Activated CD8-positive, alpha-beta T cell treated with anti-CD3 and anti-CD28 coated beads for 36 hours (primary cell): ENCODE measurements at regions of chr21 and their contacts with region 1.

Region 1: DNA sequence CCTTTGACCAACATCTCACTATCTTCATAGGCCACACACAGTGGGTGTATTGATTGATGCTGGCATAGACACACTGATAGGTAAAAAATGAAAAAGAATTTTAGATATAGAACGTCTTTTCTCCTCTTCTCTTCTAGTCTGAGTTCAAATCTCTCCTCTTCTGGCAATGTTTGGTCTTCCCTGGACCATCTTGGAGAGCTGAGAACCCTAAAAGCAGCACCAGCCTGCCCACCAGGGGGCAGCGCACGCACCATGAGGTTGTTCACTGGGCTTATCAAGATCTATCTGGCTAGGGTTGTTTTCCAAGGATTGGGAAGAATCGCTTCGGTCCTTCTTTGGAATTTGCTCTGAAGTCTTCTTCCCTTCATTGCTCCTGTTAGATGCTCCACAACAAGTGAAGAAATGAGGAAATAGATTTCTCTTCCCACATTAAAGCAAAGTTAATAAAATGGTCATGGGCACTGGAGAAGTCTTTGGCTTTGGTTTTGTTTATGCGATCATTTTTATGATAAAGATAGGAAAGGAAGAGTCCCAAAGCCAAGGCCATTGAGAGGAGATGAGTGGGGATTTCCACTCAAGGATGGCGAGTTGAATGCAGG is 104.0 kb upstream of the OLIG2 start:
- DNase-seq: peak; percentile 67
- ATAC-seq: no peak
- H3K4me3 Mint-ChIP-seq: no peak overlapping the region
- H3K27ac Mint-ChIP-seq: no peak overlapping the region
- H3K4me1 Mint-ChIP-seq: peaks cover 4% of the 10 kb centered on the region
- H3K27me3 Mint-ChIP-seq: no peaks in the 10 kb centered on the region
- CTCF ChIP-seq: peak; percentile 67

Region 2: DNA sequence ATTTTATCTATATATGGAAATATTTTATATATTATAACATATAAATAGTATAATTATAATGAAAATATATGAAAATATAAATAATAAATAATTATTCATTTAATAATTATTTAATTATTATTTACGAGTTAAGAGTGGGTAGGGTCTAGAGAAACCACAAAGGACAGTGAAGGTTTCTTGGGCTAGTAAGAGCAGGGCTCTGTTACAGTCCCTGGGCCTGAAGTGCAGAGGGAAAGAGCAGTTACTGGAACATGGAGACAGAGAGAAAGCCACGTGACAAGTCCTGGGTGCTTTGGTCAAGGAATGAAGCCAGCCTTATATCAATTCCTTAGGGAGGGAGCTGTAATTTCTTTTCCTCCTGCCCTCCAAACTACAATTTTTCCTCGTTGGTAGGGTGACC is 13.2 kb before region 1 on chr21:
- CTCF ChIA-PET with region 1: interaction called, 17 read pairs
- POLR2A ChIA-PET with region 1: interaction called, 4 read pairs
- intact Hi-C with region 1: no loop called
- DNase-seq: no peak
- ATAC-seq: no peak
- H3K4me3 Mint-ChIP-seq: no peak overlapping the region
- H3K27ac Mint-ChIP-seq: no peak overlapping the region
- H3K4me1 Mint-ChIP-seq: peaks cover under 1% of the 10 kb centered on the region
- H3K27me3 Mint-ChIP-seq: no peaks in the 10 kb centered on the region
- CTCF ChIP-seq: no peak